Heart right ventricle (tissue), 16 donors: ENCODE measurements at regions of chr9 and their contacts with region 1.

Region 1: GRCh38 chr9:87662808-87663528 is 63.0 kb upstream of the CTSL start:
- DNase-seq: peak; percentile 78 to 84
- ATAC-seq: peak; percentile 53 to 82 (median 68)
- H3K4me3 ChIP-seq: no peak overlapping the region
- H3K27ac ChIP-seq: no peak overlapping the region
- H3K4me1 ChIP-seq: peaks cover 0 to 3% (median 0%) of the 10 kb centered on the region in 9 donors
- H3K27me3 ChIP-seq: no peaks in the 10 kb centered on the region
- CTCF ChIP-seq: peak; percentile 53 to 91 (median 73)

Region 2: DNA sequence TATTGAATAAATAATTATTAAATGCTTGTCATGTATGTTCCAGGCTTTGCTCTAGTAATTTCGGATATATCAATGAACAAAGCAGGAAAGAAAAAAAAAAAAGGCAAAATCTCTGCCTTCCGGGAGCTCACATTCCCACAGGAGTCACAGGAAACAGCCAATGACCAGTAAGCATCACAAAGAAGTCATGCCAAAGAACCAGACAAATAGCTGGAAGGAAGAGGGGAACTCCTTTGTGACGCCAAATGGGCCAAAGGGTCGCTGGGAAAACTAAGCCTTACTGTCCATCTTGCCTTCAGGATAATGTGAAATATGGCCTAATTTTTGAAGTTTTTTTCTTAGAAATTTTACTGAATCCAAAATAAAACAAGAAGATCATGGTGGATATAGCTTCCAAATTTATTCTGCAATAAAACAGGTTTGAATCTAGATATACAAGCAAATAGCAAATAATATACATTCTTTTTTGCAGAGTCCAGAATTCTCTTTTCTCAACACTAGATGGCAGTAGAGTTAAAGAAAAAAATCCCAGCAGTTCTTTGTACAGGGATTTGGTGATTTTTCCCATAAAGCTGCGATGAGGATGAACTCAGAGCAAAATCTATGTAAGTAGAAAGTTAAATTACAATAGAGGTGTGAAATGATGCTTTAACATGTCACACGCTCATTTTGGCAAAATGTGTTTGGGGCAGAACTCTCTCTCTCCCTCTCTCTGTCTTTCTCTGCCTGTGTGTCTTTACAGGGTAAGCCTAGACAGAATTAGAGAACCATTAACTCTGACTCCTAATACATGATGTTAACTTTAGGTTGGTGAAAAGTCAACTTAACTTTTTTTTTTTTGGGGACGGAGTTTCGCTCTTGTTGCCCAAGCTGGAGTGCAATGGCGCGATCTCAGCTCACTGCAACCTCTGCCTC is 1248.7 kb before region 1 on chr9:
- intact Hi-C with region 1: loop called in 2 of 10 experiments (anchors 10 kb)
- DNase-seq: no peak
- ATAC-seq: peak in 2 of 8 donors; percentile 49 to 67
- H3K4me3 ChIP-seq: no peak overlapping the region
- H3K27ac ChIP-seq: no peak overlapping the region
- H3K4me1 ChIP-seq: peaks cover 0 to 10% (median 0%) of the 10 kb centered on the region in 9 donors
- H3K27me3 ChIP-seq: peaks cover 0 to 12% (median under 1%) of the 10 kb centered on the region in 7 donors
- CTCF ChIP-seq: peak; percentile 56 to 84 (median 74)

Region 3: GRCh38 chr9:86434039-86434726 is 1228.8 kb before region 1 on chr9:
- intact Hi-C with region 1: loop called in 1 of 10 experiments (anchors 5 kb)
- DNase-seq: peak in 1 of 2 donors; percentile 17
- ATAC-seq: peak in 7 of 8 donors; percentile 47 to 78 (median 71)
- H3K4me3 ChIP-seq: peak overlapping the region in 2 of 10 donors; percentile 14 to 18
- H3K27ac ChIP-seq: peak overlapping the region in 3 of 10 donors; percentile 4 to 35 (median 17)
- H3K4me1 ChIP-seq: peaks cover 0 to 4% (median 0%) of the 10 kb centered on the region in 9 donors
- H3K27me3 ChIP-seq: peaks cover 0 to 11% (median 4%) of the 10 kb centered on the region in 7 donors
- CTCF ChIP-seq: peak; percentile 47 to 82 (median 73)

Region 4: GRCh38 chr9:87336914-87337333 is 326.0 kb before region 1 on chr9:
- intact Hi-C with region 1: loop called (anchors 1 to 5 kb)
- DNase-seq: peak in 1 of 2 donors; percentile 40
- ATAC-seq: peak in 7 of 8 donors; percentile 55 to 85 (median 79)
- H3K4me3 ChIP-seq: peak overlapping the region in 9 of 10 donors; percentile 6 to 42 (median 33)
- H3K27ac ChIP-seq: no peak overlapping the region
- H3K4me1 ChIP-seq: peaks cover 0 to 15% (median 7%) of the 10 kb centered on the region in 9 donors
- H3K27me3 ChIP-seq: peaks cover 0 to 30% (median 20%) of the 10 kb centered on the region in 7 donors
- CTCF ChIP-seq: peak; percentile 41 to 73 (median 67)

Region 5: GRCh38 chr9:87342743-87343142 is 320.2 kb before region 1 on chr9:
- intact Hi-C with region 1: loop called (anchors 1 to 5 kb)
- DNase-seq: peak; percentile 23 to 30
- ATAC-seq: peak; percentile 28 to 81 (median 61)
- H3K4me3 ChIP-seq: no peak overlapping the region
- H3K27ac ChIP-seq: no peak overlapping the region
- H3K4me1 ChIP-seq: peaks cover 0 to 3% (median 1%) of the 10 kb centered on the region in 9 donors
- H3K27me3 ChIP-seq: peaks cover 0 to 21% (median 14%) of the 10 kb centered on the region in 7 donors
- CTCF ChIP-seq: no peak

Region 6: DNA sequence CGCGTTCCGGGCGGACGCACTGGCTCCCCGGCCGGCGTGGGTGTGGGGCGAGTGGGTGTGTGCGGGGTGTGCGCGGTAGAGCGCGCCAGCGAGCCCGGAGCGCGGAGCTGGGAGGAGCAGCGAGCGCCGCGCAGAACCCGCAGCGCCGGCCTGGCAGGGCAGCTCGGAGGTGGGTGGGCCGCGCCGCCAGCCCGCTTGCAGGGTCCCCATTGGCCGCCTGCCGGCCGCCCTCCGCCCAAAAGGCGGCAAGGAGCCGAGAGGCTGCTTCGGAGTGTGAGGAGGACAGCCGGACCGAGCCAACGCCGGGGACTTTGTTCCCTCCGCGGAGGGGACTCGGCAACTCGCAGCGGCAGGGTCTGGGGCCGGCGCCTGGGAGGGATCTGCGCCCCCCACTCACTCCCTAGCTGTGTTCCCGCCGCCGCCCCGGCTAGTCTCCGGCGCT is 165.3 kb before region 1 on chr9 and contains the start of gene DAPK1:
- intact Hi-C with region 1: loop called in 1 of 10 experiments (anchors 10 kb)
- DNase-seq: peak; percentile 21 to 60
- ATAC-seq: peak; percentile 71 to 90 (median 79)
- H3K4me3 ChIP-seq: peak within 1 kb of the TSS; percentile 46 to 76 (median 64)
- H3K27ac ChIP-seq: peak within 1 kb of the TSS in 8 of 10 donors; percentile 2 to 91 (median 57)
- H3K4me1 ChIP-seq: peaks cover 0 to 58% (median 12%) of the 10 kb centered on the region in 9 donors
- H3K27me3 ChIP-seq: peaks cover 7 to 61% (median 45%) of the 10 kb centered on the region in 7 donors
- CTCF ChIP-seq: peak in 3 of 9 donors; percentile 5 to 18 (median 14)
- total RNA-seq, gene DAPK1: 2.3 to 15.5 (median 4.3) TPM

Region 7: DNA sequence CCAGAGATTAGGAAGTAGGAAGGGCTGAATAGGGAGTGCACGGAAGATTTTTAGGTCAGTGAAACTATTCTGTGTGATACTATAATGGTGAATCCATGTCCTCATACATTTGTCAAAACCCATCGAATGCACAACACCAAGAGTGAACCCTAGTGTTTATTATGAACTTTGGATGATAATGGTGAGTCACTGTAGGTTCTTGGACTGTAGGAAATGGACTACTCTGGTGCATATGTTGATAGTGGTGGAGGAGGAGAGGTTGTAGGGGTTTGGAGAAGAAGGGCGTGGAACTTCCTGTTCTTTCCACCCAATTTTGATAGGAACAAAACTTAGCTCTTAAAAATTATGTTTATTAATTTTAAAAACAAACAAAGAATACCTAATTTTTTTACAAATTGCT is 77.2 kb after region 1 on chr9:
- intact Hi-C with region 1: no loop called
- DNase-seq: no peak
- ATAC-seq: no peak
- H3K4me3 ChIP-seq: no peak overlapping the region
- H3K27ac ChIP-seq: no peak overlapping the region
- H3K4me1 ChIP-seq: no peaks in the 10 kb centered on the region
- H3K27me3 ChIP-seq: peaks cover 0 to 24% (median 8%) of the 10 kb centered on the region in 7 donors
- CTCF ChIP-seq: no peak